Heart left ventricle (tissue), 16 donors: ENCODE measurements at regions of chr2 and their contacts with region 1.

Region 1: GRCh38 chr2:38115216-38116032 is 39.5 kb upstream of the CYP1B1 start:
- DNase-seq: peak; percentile 81 to 83 (median 82)
- ATAC-seq: peak; percentile 16 to 88 (median 83)
- H3K4me3 ChIP-seq: no peak overlapping the region
- H3K27ac ChIP-seq: peak overlapping the region in 8 of 12 donors; percentile 10 to 66 (median 56)
- H3K4me1 ChIP-seq: peaks cover 0 to 51% (median 32%) of the 10 kb centered on the region in 12 donors
- H3K27me3 ChIP-seq: no peaks in the 10 kb centered on the region
- CTCF ChIP-seq: peak; percentile 86 to 97 (median 92)
- POLR2A ChIP-seq: no peak

Region 2: GRCh38 chr2:37389989-37390765 is 725.2 kb before region 1 on chr2:
- intact Hi-C with region 1: loop called in 1 of 10 experiments (anchors 10 kb)
- DNase-seq: peak in 3 of 5 donors; percentile 30 to 34 (median 31)
- ATAC-seq: peak in 3 of 4 donors; percentile 67 to 93 (median 74)
- H3K4me3 ChIP-seq: no peak overlapping the region
- H3K27ac ChIP-seq: peak overlapping the region in 8 of 12 donors; percentile 26 to 87 (median 54)
- H3K4me1 ChIP-seq: peaks cover 0 to 46% (median 9%) of the 10 kb centered on the region in 12 donors
- H3K27me3 ChIP-seq: no peaks in the 10 kb centered on the region
- CTCF ChIP-seq: no peak
- POLR2A ChIP-seq: no peak

Region 3: DNA sequence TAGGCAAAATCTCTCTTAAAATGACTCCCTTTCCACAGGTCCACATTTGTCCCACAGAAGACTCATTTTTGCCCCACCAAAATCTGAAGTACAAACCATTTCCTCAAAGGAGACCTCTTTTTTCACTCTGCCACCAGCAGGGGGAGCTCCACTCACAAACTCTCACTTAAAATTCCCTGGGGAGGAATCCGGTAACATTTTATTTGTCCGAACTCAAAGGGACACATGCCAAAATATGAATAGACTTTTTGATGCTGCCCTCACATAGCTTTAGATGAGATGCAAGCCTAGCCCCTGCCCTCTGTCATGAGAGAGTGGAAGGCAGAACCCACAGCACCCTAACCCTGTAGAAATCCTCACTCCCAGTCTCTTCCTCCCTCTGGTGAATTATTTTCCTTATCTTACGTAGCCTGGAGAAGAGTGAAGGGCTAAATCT is 133.3 kb before region 1 on chr2:
- intact Hi-C with region 1: loop called (anchors 2 to 10 kb)
- DNase-seq: peak in 4 of 5 donors; percentile 65 to 78 (median 70)
- ATAC-seq: peak in 2 of 4 donors; percentile 42 to 61
- H3K4me3 ChIP-seq: peak overlapping the region in 9 of 12 donors; percentile 21 to 48 (median 32)
- H3K27ac ChIP-seq: no peak overlapping the region
- H3K4me1 ChIP-seq: peaks cover 0 to 8% (median 0%) of the 10 kb centered on the region in 12 donors
- H3K27me3 ChIP-seq: no peaks in the 10 kb centered on the region
- CTCF ChIP-seq: peak; percentile 80 to 91 (median 84)
- POLR2A ChIP-seq: no peak

Region 4: DNA sequence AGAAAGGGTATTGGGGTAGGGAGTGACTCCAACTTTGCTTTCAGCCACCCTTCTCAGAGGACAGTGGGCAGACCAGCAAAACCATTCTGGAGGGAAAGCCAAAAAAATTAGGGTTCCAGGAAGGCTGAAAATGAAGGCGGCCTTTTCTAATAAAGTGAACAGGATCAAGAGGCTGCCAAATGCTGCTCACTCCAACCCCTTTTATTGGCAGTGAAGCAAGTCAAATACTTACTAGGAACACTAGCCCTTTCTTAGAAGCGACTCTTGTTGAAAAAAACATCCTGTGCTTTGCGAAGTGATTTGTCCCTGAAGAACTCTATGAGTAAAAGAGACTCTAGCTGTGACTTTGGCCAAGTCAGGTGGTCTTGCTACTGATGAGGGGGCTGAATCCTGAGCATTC is 44.2 kb after region 1 on chr2:
- intact Hi-C with region 1: loop called in 1 of 10 experiments (anchors 5 kb)
- DNase-seq: peak in 1 of 5 donors; percentile 27
- ATAC-seq: peak; percentile 61 to 83 (median 73)
- H3K4me3 ChIP-seq: no peak overlapping the region
- H3K27ac ChIP-seq: peak overlapping the region in 11 of 12 donors; percentile 17 to 88 (median 51)
- H3K4me1 ChIP-seq: peaks cover 0 to 40% (median 2%) of the 10 kb centered on the region in 12 donors
- H3K27me3 ChIP-seq: no peaks in the 10 kb centered on the region
- CTCF ChIP-seq: no peak
- POLR2A ChIP-seq: no peak

Region 5: GRCh38 chr2:38274286-38275276 is 159.2 kb after region 1 on chr2:
- intact Hi-C with region 1: loop called in 4 of 10 experiments (anchors 5 to 10 kb)
- DNase-seq: peak in 2 of 5 donors; percentile 22 to 32
- ATAC-seq: peak; percentile 32 to 81 (median 76)
- H3K4me3 ChIP-seq: no peak overlapping the region
- H3K27ac ChIP-seq: no peak overlapping the region
- H3K4me1 ChIP-seq: peaks cover 0 to 3% (median 0%) of the 10 kb centered on the region in 12 donors
- H3K27me3 ChIP-seq: no peaks in the 10 kb centered on the region
- CTCF ChIP-seq: peak; percentile 42 to 78 (median 68)
- POLR2A ChIP-seq: no peak

Region 6: GRCh38 chr2:38465789-38466127 is 350.3 kb after region 1 on chr2:
- intact Hi-C with region 1: no loop called
- DNase-seq: peak in 1 of 5 donors; percentile 37
- ATAC-seq: peak in 3 of 4 donors; percentile 65 to 69 (median 68)
- H3K4me3 ChIP-seq: no peak overlapping the region
- H3K27ac ChIP-seq: peak overlapping the region in 1 of 12 donors; percentile 85
- H3K4me1 ChIP-seq: peaks cover 0 to 5% (median 0%) of the 10 kb centered on the region in 12 donors
- H3K27me3 ChIP-seq: no peaks in the 10 kb centered on the region
- CTCF ChIP-seq: peak in 11 of 12 donors; percentile 15 to 54 (median 43)
- POLR2A ChIP-seq: no peak